Activated CD4-positive, alpha-beta memory T cell treated with anti-CD3 and anti-CD28 coated beads for 36 hours (primary cell): ENCODE measurements at regions of chr14 and their contacts with region 1.

Region 1: DNA sequence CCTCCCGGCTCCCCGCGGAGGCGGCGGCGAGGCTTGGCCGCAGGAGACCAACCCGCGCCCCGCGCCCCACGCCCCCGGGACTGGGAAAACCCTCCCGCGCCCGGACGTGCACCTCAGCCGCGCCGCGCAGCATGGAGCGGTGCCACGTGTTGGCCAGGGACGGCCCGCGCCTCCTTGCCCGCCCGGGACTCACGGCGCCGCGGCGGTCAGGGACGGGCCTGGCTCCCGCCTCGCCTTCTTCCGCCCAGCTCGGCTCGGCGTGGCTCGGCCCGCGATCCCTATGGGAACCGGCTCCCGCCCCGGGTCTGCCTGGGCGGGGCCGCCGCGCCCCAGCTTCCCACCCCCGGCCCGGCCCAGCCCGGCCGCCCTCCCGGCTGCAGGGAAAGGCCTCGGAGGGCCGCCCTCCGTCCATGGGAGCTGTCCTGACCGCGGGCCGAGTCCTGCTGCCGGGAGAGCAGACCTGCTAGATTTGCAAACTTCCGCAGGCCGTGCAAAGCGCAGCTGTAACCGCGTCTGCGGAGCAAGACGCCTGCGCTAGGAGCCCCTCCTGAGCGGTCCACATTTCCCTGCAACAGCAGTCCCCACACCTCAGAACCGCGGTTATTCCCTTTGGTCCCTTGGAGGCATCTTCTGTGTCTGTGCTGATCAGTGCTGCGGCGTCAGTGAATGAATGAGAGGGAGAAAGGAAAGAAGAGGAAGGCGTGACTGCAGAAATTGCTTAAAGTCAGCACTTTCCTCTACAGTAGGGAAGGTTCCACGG is at the start of gene CDKL1:
- DNase-seq: peak; percentile 57
- H3K4me3 Mint-ChIP-seq: peak within 1 kb of the TSS; percentile 82
- H3K27ac Mint-ChIP-seq: no peak within 1 kb of the TSS
- H3K4me1 Mint-ChIP-seq: peaks cover 11% of the 10 kb centered on the region
- H3K27me3 Mint-ChIP-seq: peaks cover 4% of the 10 kb centered on the region
- total RNA-seq, gene CDKL1: 2.4 to 3.4 TPM

Region 2: GRCh38 chr14:50342221-50343078 is 54.4 kb before region 1 on chr14:
- CTCF ChIA-PET with region 1: interaction called, 3 read pairs
- POLR2A ChIA-PET with region 1: no interaction called
- intact Hi-C with region 1: loop called (anchors 1 kb)
- DNase-seq: peak; percentile 56
- H3K4me3 Mint-ChIP-seq: no peak overlapping the region
- H3K27ac Mint-ChIP-seq: no peak overlapping the region
- H3K4me1 Mint-ChIP-seq: peaks cover 22% of the 10 kb centered on the region
- H3K27me3 Mint-ChIP-seq: peaks cover 4% of the 10 kb centered on the region